PC-3 (cell line): ENCODE measurements at regions of chr10 and their contacts with region 1.

Region 1: DNA sequence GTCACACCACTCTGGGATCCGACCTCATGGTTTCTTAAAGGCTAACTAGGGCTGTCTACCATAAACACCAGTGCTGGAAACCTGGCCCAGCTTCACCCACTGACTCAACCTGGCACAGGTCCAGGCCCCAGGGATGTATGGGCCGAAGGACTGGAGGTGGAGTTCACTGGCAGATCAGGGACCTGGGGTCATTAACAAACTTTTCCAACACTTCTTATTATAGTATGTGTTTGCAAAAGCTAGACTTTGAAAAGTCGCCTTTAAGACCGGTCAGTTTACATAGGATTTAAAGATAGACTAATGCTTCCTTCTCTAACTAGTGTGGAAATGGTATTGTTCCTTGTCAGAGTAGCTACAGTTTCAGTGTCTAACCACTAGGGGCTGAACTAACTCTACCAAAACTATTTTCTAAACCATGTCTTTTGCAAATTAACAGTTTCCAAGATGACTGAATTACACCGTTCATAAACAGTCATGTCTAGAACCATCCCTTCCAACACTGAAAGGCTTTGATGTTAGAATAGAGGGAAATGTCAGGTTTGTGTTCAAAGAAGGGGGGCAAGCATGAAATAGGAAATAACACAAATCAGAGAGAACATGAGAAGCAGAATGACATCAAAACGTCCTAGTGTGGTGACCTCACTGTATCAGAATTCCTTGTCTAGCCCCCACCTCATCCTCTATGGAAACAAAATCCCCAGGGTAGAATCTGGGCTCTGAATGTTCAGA is 29.7 kb downstream of the STN1 start:
- DNase-seq: peak; percentile 83
- ATAC-seq: peak; percentile 31
- H3K4me3 ChIP-seq: no peak overlapping the region
- H3K27ac ChIP-seq: peak overlapping the region; percentile 100
- H3K4me1 ChIP-seq: peaks cover 51% of the 10 kb centered on the region
- H3K27me3 ChIP-seq: no peaks in the 10 kb centered on the region
- CTCF ChIP-seq: peak; percentile 87

Region 2: DNA sequence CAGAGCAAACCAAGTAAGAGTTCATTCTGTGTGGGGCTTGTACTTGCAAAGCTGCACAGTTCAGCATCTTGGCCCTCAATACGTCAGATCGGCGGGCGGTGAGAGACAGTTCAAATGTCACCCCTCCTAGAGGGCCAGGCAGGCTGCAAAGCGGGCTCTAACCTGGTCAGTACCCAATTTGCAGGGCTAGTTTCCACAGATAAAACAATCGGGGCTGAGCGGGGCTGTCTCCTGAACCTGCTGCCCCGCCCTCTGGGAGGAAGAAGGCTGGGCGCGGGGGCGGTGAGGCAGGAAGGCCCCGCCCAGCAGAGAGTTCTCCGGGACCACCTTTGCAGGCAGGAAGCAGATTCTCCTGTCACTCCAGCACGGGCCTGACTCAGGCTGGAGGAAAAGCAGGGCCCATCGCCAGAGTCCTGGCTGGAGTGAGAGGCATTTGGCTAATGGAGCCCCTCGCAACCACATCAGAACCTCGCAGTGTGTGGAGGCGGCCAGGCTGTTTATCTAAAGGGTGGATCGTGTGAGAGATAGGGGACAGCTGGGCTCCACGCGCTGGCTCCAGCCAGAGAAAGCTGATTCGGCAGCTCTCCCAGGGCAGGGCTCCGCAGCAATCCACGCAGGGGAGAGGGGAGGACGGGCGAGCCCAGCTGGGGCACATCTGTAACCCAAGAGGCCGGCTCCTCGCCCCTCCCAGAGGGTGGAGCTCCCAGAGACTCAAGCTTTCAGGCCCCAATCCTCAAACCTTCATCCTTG is 116.0 kb before region 1 on chr10:
- CTCF ChIA-PET with region 1: no interaction called
- POLR2A ChIA-PET with region 1: no interaction called
- intact Hi-C with region 1: no loop called
- DNase-seq: peak; percentile 56
- ATAC-seq: peak; percentile 93
- H3K4me3 ChIP-seq: peak overlapping the region; percentile 65
- H3K27ac ChIP-seq: peak overlapping the region; percentile 51
- H3K4me1 ChIP-seq: peaks cover 14% of the 10 kb centered on the region; the same call in 1 of the 2 replicates
- H3K27me3 ChIP-seq: no peaks in the 10 kb centered on the region
- CTCF ChIP-seq: no peak

Region 3: GRCh38 chr10:103859161-103860086 is 28.9 kb before region 1 on chr10:
- CTCF ChIA-PET with region 1: no interaction called
- POLR2A ChIA-PET with region 1: no interaction called
- intact Hi-C with region 1: loop called (anchors 1 kb)
- DNase-seq: peak; percentile 75
- ATAC-seq: peak; percentile 61
- H3K4me3 ChIP-seq: no peak overlapping the region
- H3K27ac ChIP-seq: no peak overlapping the region
- H3K4me1 ChIP-seq: peaks cover 20% of the 10 kb centered on the region
- H3K27me3 ChIP-seq: no peaks in the 10 kb centered on the region
- CTCF ChIP-seq: peak; percentile 70

Region 4: GRCh38 chr10:103966671-103967447 is 78.6 kb after region 1 on chr10 and contains the start of gene SLK:
- CTCF ChIA-PET with region 1: interaction called, 3 read pairs
- POLR2A ChIA-PET with region 1: interaction called, 4 read pairs
- intact Hi-C with region 1: loop called (anchors 1 kb)
- DNase-seq: peak; percentile 80
- ATAC-seq: peak; percentile 65
- H3K4me3 ChIP-seq: peak within 1 kb of the TSS; percentile 89
- H3K27ac ChIP-seq: peak within 1 kb of the TSS; percentile 48
- H3K4me1 ChIP-seq: peaks cover 20% of the 10 kb centered on the region
- H3K27me3 ChIP-seq: no peaks in the 10 kb centered on the region
- CTCF ChIP-seq: no peak
- total RNA-seq, gene SLK: 17.3 and 20.2 TPM in 2 replicates

Region 5: DNA sequence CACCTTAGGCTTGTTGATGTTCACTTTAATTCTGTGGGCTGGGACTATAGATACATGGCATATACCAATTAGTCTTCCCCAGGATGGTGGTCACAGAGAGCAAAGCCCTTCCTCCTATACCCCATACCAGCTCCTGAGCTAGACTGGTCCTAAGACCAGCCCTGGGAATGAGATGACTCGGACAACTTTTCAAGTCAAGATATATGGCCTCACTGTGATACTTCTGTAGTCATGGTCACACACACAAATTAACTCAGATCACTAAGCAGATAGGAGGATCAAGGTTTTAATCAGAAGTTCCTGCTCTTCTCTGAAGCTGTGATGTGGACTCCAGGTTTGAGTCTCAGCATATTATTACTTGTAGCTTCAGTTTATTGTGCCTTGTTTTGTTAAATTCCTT is 131.7 kb after region 1 on chr10:
- CTCF ChIA-PET with region 1: interaction called, 3 read pairs
- POLR2A ChIA-PET with region 1: interaction called, 3 read pairs
- intact Hi-C with region 1: loop called (anchors 1 kb)
- DNase-seq: no peak
- ATAC-seq: no peak
- H3K4me3 ChIP-seq: no peak overlapping the region
- H3K27ac ChIP-seq: no peak overlapping the region
- H3K4me1 ChIP-seq: peaks cover 22% of the 10 kb centered on the region
- H3K27me3 ChIP-seq: no peaks in the 10 kb centered on the region
- CTCF ChIP-seq: no peak

Region 6: GRCh38 chr10:104209575-104210198 is 321.4 kb after region 1 on chr10:
- CTCF ChIA-PET with region 1: no interaction called
- POLR2A ChIA-PET with region 1: no interaction called
- intact Hi-C with region 1: loop called (anchors 1 kb)
- DNase-seq: peak; percentile 55
- ATAC-seq: peak; percentile 49; the same call in 1 of the 2 replicates
- H3K4me3 ChIP-seq: no peak overlapping the region
- H3K27ac ChIP-seq: no peak overlapping the region
- H3K4me1 ChIP-seq: no peaks in the 10 kb centered on the region
- H3K27me3 ChIP-seq: no peaks in the 10 kb centered on the region
- CTCF ChIP-seq: peak; percentile 66